ENCODE measurements at regions of chr16 and their contacts with region 1.

Region 1: DNA sequence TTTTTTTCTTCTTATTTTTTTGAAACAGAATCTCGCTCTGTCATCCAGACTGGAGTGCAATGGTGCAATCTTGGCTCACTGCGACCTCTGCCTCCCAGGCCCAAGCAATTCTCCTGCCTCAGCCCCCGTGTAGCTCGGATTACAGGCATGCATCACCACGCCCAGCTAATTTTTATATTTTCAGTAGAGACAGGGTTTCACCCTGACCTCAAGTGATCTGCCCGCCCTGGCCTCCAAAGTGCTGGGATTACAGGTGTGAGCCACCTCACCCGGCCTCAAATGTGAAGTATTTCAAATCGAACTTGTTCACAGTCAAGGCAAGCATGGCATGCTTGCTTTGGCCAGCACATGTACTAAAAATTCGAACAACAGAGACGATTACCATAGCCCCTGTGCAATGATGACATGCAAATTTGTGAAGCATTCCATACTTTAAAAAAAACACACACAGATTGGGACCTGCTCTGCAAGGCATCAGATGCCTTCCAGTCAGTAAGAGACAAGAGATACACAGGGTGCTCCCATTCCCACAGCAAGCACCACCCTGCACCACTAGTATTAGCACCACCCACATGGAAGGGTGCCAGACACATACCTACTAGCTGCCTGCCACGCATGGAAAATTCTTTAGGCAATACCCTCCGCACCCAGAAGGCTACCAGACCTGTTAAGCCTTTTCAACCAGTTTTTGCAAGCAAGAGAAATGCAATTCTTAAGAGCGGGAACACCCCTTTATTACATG is 47.2 kb downstream of the ANKRD11 start:
- DNase-seq: peak; percentile 77
- H3K4me3 ChIP-seq: no peak overlapping the region
- H3K27ac ChIP-seq: peak overlapping the region; percentile 0 to 55
- H3K4me1 ChIP-seq: peaks cover 32% of the 10 kb centered on the region
- H3K27me3 ChIP-seq: no peaks in the 10 kb centered on the region
- CTCF ChIP-seq: no peak
- POLR2A ChIP-seq: no peak

Region 2: DNA sequence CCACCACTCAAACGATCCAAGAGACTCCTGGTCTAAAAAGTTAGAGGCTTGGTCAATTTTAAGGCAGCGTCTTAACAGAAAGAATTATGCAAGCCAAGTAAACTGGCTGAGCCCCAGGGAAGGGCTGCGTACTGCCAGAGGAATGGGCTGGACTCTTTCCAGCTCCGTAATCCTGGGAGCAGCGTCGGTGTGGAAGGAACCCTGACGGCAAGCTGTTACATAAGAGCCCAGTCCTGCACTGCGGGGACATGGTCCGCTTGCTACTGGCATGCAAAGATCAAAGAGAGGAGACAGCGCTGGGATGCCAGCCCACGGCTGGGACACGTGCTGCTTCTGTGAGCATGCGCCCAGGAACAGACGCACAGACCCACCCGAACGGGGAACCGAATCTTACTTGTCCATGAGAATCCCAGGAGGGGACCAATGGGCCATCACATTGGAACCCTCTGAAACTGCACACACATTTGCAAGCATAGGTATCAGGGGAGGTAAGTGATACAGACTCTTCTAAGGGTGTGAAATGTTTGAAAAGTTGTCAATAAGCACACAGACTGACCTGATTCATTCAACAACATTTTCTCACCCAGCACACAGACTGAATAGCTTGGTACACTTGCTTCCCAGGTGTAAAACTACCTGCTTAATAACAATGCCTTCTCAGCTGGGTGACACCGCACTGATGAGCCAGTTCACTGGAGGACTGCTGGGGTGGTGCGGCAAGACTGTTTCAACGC is 47.9 kb before region 1 on chr16:
- intact Hi-C with region 1: loop called (anchors 10 kb)
- DNase-seq: peak; percentile 91
- H3K4me3 ChIP-seq: no peak overlapping the region
- H3K27ac ChIP-seq: peak overlapping the region; percentile 19 to 33
- H3K4me1 ChIP-seq: peaks cover 8% of the 10 kb centered on the region
- H3K27me3 ChIP-seq: no peaks in the 10 kb centered on the region
- CTCF ChIP-seq: no peak
- POLR2A ChIP-seq: no peak

Measured in prostate gland (tissue), 2 donors.